ENCODE measurements at regions of chr17 and their contacts with region 1.

Region 1: GRCh38 chr17:35764123-35764991 is 3.7 kb downstream of the C17orf50 start:
- DNase-seq: peak; percentile 86
- H3K4me3 ChIP-seq: peak overlapping the region; percentile 23 to 50 (median 44)
- H3K27ac ChIP-seq: no peak overlapping the region
- H3K4me1 ChIP-seq: peaks cover 10% of the 10 kb centered on the region
- H3K27me3 ChIP-seq: no peaks in the 10 kb centered on the region
- CTCF ChIP-seq: peak; percentile 77 to 95

Region 2: DNA sequence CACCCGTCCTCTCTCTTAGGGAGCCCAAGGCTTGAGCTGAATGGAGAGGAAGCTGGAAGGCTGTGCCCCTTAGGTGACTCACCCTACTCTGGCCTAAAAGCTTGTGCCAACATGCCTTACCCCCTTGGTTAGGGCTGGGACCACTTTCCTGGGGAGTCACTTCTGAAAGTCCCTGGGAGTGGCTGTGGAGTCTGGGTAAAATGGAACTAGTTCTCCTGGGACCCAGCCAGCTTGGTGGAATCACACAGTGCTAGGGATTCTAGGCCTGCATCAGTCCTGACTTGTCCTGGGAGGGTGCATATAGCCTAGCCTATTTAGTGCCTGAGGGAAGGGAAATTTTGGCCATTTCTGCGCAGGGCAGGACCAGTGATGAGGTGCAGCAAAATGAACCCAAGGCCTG is 20.5 kb after region 1 on chr17:
- CTCF ChIA-PET with region 1: interaction called, 6 read pairs
- dilution Hi-C with region 1: no loop called
- in situ Hi-C with region 1: no loop called
- intact Hi-C with region 1: loop called (anchors 1 kb)
- DNase-seq: peak; percentile 100
- H3K4me3 ChIP-seq: no peak overlapping the region
- H3K27ac ChIP-seq: peak overlapping the region; percentile 96
- H3K4me1 ChIP-seq: peaks cover 64% of the 10 kb centered on the region
- H3K27me3 ChIP-seq: no peaks in the 10 kb centered on the region
- CTCF ChIP-seq: no peak

Region 3: DNA sequence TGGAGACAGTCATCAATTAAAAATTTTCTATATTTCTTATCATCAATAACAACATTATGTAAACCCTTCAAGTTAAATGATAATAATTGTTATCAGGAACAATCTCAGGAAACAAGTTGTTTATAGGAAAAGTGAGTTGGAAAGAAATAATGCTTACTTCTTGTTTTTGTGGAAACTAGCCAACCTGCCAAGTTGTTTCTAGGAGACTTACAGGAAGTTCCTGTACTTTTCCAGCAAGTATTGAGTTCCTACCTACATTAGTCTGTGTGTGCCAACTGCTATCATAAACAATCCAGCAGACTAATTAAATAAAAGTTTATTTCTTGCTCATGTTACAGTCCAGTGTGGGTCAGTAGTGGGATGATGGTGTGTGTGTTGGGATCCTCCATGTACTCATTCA is 223.8 kb after region 1 on chr17:
- CTCF ChIA-PET with region 1: no interaction called
- dilution Hi-C with region 1: no loop called
- in situ Hi-C with region 1: no loop called
- intact Hi-C with region 1: no loop called
- DNase-seq: no peak
- H3K4me3 ChIP-seq: no peak overlapping the region
- H3K27ac ChIP-seq: no peak overlapping the region
- H3K4me1 ChIP-seq: no peaks in the 10 kb centered on the region
- H3K27me3 ChIP-seq: no peaks in the 10 kb centered on the region
- CTCF ChIP-seq: no peak